Prostate gland (tissue), 2 donors: ENCODE measurements at regions of chr6 and their contacts with region 1.

Region 1: DNA sequence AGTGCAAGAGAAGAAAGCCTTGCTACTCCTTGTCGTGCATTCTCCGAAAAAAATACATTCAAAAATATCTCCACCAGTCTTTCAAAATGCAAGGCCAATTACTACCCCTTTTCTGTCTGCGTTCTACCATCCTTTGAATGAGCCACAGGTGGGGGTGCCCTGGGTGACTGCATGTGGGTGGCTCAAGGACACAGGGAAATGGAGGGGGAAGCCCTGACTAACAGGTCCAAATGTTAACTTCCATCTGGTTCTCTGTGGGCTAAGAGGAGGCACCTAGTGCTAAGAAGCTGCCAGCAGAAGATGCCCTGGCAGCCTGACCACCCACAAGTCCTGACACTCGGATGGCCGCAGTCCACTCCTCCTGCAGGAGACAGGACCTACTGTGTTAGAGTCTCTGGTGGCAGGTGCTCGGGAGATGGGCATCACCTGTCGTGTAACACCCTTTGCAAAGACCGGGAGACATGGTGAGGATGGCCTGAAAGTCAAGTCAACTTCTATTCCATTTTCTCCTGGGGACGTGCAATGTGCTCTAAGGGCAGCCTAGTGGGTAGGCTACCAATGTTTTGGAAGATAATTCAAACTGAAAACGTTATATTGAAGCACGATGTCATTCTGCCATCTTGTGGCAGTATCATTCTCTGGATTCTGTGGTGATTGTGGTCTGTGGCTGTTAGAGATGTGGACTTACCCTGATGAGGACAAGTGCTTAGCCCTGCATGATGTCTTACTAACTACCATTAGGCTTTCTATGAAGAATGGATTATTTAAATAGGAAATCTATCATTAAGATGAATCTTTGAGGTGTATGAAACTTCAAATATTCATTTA is 27.4 kb upstream of the IGF2R start:
- DNase-seq: no peak
- H3K4me3 ChIP-seq: no peak overlapping the region
- H3K27ac ChIP-seq: no peak overlapping the region
- H3K4me1 ChIP-seq: no peaks in the 10 kb centered on the region
- H3K27me3 ChIP-seq: no peaks in the 10 kb centered on the region
- CTCF ChIP-seq: peak in 2 of 4 experiments; percentile 40 to 43
- POLR2A ChIP-seq: no peak

Region 2: GRCh38 chr6:159739341-159739740 is 202.2 kb before region 1 on chr6:
- intact Hi-C with region 1: no loop called
- DNase-seq: no peak
- H3K4me3 ChIP-seq: no peak overlapping the region
- H3K27ac ChIP-seq: no peak overlapping the region
- H3K4me1 ChIP-seq: no peaks in the 10 kb centered on the region
- H3K27me3 ChIP-seq: no peaks in the 10 kb centered on the region
- CTCF ChIP-seq: no peak
- POLR2A ChIP-seq: no peak

Region 3: DNA sequence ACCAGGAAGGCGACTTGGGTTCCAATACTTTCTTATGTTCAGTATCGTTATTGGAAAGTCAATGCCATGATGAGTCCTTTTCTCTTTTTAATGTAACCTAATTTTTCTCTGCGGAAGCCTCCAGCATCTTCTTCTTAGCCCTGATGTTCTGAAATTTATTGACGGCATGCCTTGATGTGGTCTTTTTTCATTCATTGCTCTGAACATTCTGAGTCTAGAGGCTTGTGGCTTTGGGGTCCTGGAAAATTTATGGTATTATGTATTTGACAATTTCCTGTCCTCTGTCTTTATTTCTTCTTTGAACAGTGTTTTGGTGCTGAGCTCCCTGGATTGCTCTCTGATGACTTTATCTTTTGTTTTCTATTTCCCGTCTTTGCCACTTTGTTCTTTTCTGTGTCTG is 79.4 kb before region 1 on chr6:
- intact Hi-C with region 1: loop called (anchors 2 kb)
- DNase-seq: no peak
- H3K4me3 ChIP-seq: no peak overlapping the region
- H3K27ac ChIP-seq: no peak overlapping the region
- H3K4me1 ChIP-seq: no peaks in the 10 kb centered on the region
- H3K27me3 ChIP-seq: no peaks in the 10 kb centered on the region
- CTCF ChIP-seq: no peak
- POLR2A ChIP-seq: no peak